BJ (cell line): ENCODE measurements at regions of chr2 and their contacts with region 1.

Region 1: GRCh38 chr2:68828887-68829708 is 42.1 kb downstream of the BMP10 start:
- DNase-seq: peak; percentile 82
- H3K4me3 ChIP-seq: no peak overlapping the region
- H3K27me3 ChIP-seq: no peaks in the 10 kb centered on the region
- CTCF ChIP-seq: no peak

Region 2: GRCh38 chr2:68839260-68839833 is 10.2 kb after region 1 on chr2:
- CTCF ChIA-PET with region 1: interaction called, 13 read pairs
- POLR2A ChIA-PET with region 1: no interaction called
- DNase-seq: no peak
- H3K4me3 ChIP-seq: no peak overlapping the region
- H3K27me3 ChIP-seq: no peaks in the 10 kb centered on the region; the same call in 1 of the 2 replicates
- CTCF ChIP-seq: peak; percentile 66

Region 3: GRCh38 chr2:68987021-68987503 is 158.0 kb after region 1 on chr2:
- CTCF ChIA-PET with region 1: no interaction called
- POLR2A ChIA-PET with region 1: no interaction called
- DNase-seq: no peak
- H3K4me3 ChIP-seq: no peak overlapping the region
- H3K27me3 ChIP-seq: no peaks in the 10 kb centered on the region; the same call in 1 of the 2 replicates
- CTCF ChIP-seq: no peak

Region 4: DNA sequence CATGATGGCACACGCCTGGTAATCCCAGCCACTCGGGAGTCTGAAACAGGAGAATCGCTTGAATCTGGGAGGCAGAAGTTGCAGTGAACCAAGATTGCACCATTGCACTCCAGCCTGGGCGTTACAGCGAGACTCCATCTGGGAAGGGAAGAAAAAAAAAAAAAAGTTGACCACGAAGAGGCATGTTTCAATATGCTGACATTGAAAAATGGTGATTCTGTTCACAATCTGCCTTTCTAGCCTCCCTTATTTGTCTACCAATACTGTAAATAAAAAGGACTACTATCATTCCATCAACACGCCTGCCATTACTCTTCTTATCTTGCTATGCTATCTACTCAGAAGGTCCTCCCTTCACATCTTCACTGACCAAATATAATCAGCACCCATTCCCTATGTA is 539.5 kb after region 1 on chr2:
- CTCF ChIA-PET with region 1: no interaction called
- POLR2A ChIA-PET with region 1: no interaction called
- DNase-seq: no peak
- H3K4me3 ChIP-seq: no peak overlapping the region
- H3K27me3 ChIP-seq: no peaks in the 10 kb centered on the region
- CTCF ChIP-seq: no peak